Activated B cell treated with CpG ODN at 0.5 μM for 24 hours (primary cell): ENCODE measurements at regions of chr9 and their contacts with region 1.

Region 1: GRCh38 chr9:33290247-33291030 is at the start of gene NFX1:
- DNase-seq: peak; percentile 97
- ATAC-seq: peak; percentile 80
- H3K4me3 Mint-ChIP-seq: peak within 1 kb of the TSS; percentile 99
- H3K27ac Mint-ChIP-seq: peak within 1 kb of the TSS; percentile 100
- H3K4me1 Mint-ChIP-seq: peaks cover 62% of the 10 kb centered on the region
- H3K27me3 Mint-ChIP-seq: no peaks in the 10 kb centered on the region
- CTCF ChIP-seq: no peak
- total RNA-seq, gene NFX1: 51.0 and 57.2 TPM in 2 replicates

Region 2: GRCh38 chr9:32550562-32551433 is 739.6 kb before region 1 on chr9:
- CTCF ChIA-PET with region 1: no interaction called
- POLR2A ChIA-PET with region 1: interaction called, 5 read pairs
- intact Hi-C with region 1: loop called (anchors 10 kb)
- DNase-seq: peak; percentile 91
- ATAC-seq: peak; percentile 80
- H3K4me3 Mint-ChIP-seq: peak overlapping the region; percentile 95
- H3K27ac Mint-ChIP-seq: peak overlapping the region; percentile 98
- H3K4me1 Mint-ChIP-seq: peaks cover 34% of the 10 kb centered on the region
- H3K27me3 Mint-ChIP-seq: no peaks in the 10 kb centered on the region
- CTCF ChIP-seq: no peak

Region 3: DNA sequence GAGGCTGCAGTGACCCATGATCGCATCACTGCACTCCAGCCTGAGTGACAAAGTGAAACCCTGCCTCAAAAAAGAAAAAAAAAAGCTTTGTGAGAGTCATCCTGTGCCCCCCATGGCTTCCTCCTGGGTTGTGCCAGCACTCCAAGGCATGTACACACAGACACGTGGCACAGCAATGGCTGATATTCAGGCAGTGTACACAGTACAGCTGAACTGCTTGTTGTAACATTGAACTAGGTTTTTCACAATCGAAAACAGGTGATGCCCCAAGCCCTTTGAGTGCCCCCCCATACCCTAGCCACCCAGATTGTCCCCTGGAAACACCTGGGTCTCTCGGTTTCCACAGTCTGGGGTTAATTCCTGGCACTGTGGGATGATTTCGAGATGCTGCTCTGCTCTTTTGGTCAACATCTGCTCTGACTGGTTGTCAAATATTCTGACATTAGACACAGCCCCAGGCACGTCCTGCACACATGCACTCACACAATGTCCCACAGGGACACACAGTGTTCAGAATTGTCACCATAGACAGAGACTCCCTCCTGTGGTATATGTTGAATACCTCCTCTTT is 41.3 kb before region 1 on chr9:
- CTCF ChIA-PET with region 1: no interaction called
- POLR2A ChIA-PET with region 1: no interaction called
- intact Hi-C with region 1: no loop called
- DNase-seq: no peak
- ATAC-seq: peak; percentile 37
- H3K4me3 Mint-ChIP-seq: no peak overlapping the region
- H3K27ac Mint-ChIP-seq: no peak overlapping the region
- H3K4me1 Mint-ChIP-seq: peaks cover 11% of the 10 kb centered on the region
- H3K27me3 Mint-ChIP-seq: no peaks in the 10 kb centered on the region
- CTCF ChIP-seq: no peak

Region 4: GRCh38 chr9:33264473-33265177 is 25.8 kb before region 1 on chr9 and contains the starts of genes BAG1 and CHMP5:
- CTCF ChIA-PET with region 1: interaction called, 3 read pairs
- POLR2A ChIA-PET with region 1: interaction called, 21 read pairs
- intact Hi-C with region 1: loop called (anchors 1 kb)
- DNase-seq: peak; percentile 99
- ATAC-seq: peak; percentile 98
- H3K4me3 Mint-ChIP-seq: peak within 1 kb of the TSS; percentile 93
- H3K27ac Mint-ChIP-seq: peak within 1 kb of the TSS; percentile 97
- H3K4me1 Mint-ChIP-seq: peaks cover 39% of the 10 kb centered on the region
- H3K27me3 Mint-ChIP-seq: no peaks in the 10 kb centered on the region
- CTCF ChIP-seq: no peak
- total RNA-seq, gene BAG1: 58.3 and 58.9 TPM in 2 replicates
- total RNA-seq, gene CHMP5: 27.4 and 28.1 TPM in 2 replicates

Region 5: DNA sequence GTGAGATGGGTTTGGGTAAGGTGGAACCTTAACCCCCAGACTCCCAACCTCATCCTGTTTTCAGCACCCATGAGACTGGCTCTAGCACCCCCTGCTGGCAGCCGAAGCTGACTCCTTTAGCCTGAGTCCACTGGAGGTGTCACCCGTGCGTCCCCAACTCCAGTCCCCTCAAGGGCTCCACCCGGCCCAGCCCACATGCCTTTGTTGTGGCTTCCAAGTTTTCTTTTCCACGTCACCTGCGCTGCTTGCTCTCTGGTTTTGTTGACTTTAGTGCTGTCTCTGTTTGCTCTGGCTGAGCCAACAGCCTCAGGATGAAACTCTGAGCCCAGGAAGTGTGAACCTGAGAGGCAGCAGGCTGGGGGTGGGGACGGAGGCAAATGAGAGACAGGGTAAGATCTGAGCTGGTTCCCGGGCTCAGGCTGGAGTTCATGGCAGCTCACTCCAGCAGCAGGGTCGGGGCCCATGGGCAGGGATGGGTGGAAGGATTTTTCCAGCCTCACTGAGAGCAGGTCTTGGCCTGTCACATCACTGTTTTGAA is 125.1 kb after region 1 on chr9:
- CTCF ChIA-PET with region 1: no interaction called
- POLR2A ChIA-PET with region 1: no interaction called
- intact Hi-C with region 1: loop called (anchors 1 kb)
- DNase-seq: peak; percentile 22
- ATAC-seq: no peak
- H3K4me3 Mint-ChIP-seq: no peak overlapping the region
- H3K27ac Mint-ChIP-seq: no peak overlapping the region
- H3K4me1 Mint-ChIP-seq: no peaks in the 10 kb centered on the region
- H3K27me3 Mint-ChIP-seq: peaks cover 19% of the 10 kb centered on the region
- CTCF ChIP-seq: no peak

Region 6: GRCh38 chr9:33473643-33474352 is 183.4 kb after region 1 on chr9 and contains the start of gene NOL6:
- CTCF ChIA-PET with region 1: interaction called, 4 read pairs
- POLR2A ChIA-PET with region 1: interaction called, 16 read pairs
- intact Hi-C with region 1: loop called (anchors 1 kb)
- DNase-seq: peak; percentile 93
- ATAC-seq: peak; percentile 99
- H3K4me3 Mint-ChIP-seq: peak within 1 kb of the TSS; percentile 99
- H3K27ac Mint-ChIP-seq: peak within 1 kb of the TSS; percentile 94
- H3K4me1 Mint-ChIP-seq: peaks cover 28% of the 10 kb centered on the region
- H3K27me3 Mint-ChIP-seq: no peaks in the 10 kb centered on the region
- CTCF ChIP-seq: no peak
- total RNA-seq, gene NOL6: 59.9 and 60.1 TPM in 2 replicates